Heart left ventricle (tissue), 16 donors: ENCODE measurements at regions of chr10 and their contacts with region 1.

Region 1: GRCh38 chr10:104353325-104354048 is at the start of gene CFAP58:
- DNase-seq: peak; percentile 89 to 97 (median 92)
- ATAC-seq: peak; percentile 70 to 94 (median 92)
- H3K4me3 ChIP-seq: peak within 1 kb of the TSS in 11 of 12 donors; percentile 2 to 61 (median 46)
- H3K27ac ChIP-seq: peak within 1 kb of the TSS in 5 of 12 donors; percentile 3 to 66 (median 16)
- H3K4me1 ChIP-seq: peaks cover 0 to 57% (median 15%) of the 10 kb centered on the region in 12 donors
- H3K27me3 ChIP-seq: no peaks in the 10 kb centered on the region
- CTCF ChIP-seq: peak; percentile 58 to 95 (median 76)
- POLR2A ChIP-seq: peak in 1 of 2 donors; percentile 50
- total RNA-seq, gene CFAP58: 1.2 to 4.9 (median 3.2) TPM

Region 2: DNA sequence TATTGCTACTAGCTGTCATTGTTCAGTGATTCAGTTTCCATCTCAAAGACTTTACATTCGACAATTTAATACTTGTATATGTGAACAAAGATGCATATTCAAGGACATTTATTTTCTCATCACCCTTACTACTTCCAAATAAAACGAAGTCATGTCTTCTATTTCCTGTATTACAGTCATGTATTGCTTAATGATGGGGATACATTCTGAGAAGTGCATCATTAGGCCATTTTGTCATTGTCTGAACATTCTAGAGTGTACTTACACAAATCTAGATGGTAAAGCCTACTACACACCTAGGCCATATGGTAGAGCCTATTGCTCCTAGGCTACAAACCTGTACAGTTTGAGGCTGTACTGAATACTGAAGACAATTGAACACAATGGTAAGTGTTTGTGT is 1908.6 kb before region 1 on chr10:
- intact Hi-C with region 1: no loop called
- DNase-seq: no peak
- ATAC-seq: no peak
- H3K4me3 ChIP-seq: no peak overlapping the region
- H3K27ac ChIP-seq: no peak overlapping the region
- H3K4me1 ChIP-seq: peaks cover 0 to 8% (median 3%) of the 10 kb centered on the region in 12 donors
- H3K27me3 ChIP-seq: no peaks in the 10 kb centered on the region
- CTCF ChIP-seq: no peak
- POLR2A ChIP-seq: no peak

Region 3: DNA sequence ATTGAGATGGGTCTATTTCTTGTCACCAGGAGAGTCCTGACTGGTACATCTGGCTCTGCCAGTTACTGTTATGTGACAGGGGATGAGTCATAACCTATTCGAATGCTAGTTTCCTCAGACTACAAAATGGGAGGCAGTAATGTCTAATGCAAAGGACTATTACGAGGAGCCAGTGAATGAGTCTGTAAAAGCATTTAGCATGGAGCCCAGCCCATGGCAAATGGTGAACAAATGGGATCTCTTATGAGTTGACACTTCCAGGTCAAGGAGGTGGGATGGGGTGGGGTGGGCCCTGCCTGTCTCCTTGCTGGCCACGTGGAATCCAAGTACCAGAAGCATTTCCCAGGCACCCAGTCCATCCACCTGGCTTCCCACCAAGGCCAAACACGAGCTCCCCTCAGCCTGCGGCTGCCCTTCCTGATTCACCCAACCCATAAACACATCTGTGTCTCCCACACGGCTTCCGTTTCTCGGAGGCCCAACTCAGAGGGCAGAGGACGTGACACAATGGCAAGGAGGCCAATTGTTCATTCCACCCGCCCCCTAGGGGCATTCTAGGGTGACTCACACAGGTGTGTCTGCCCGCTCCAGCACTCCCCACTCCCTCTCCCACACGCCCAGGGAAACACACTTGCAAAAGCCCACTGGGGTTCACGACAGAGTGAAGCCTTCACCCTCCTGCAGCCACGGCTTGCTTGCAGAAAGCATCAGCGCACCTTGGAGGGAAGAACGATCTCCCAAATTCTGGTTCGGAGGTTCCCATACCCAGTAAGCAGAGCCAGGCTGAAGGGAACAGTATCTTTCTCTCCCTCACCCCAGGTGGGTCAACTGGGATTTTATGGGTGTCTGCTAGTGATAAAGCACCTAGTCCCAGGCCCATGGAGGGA is 607.9 kb before region 1 on chr10:
- intact Hi-C with region 1: loop called in 1 of 10 experiments (anchors 10 kb)
- DNase-seq: peak in 3 of 5 donors; percentile 39 to 74 (median 49)
- ATAC-seq: peak in 3 of 4 donors; percentile 51 to 77 (median 61)
- H3K4me3 ChIP-seq: no peak overlapping the region
- H3K27ac ChIP-seq: peak overlapping the region in 11 of 12 donors; percentile 2 to 73 (median 43)
- H3K4me1 ChIP-seq: peaks cover 0 to 61% (median 22%) of the 10 kb centered on the region in 12 donors
- H3K27me3 ChIP-seq: no peaks in the 10 kb centered on the region
- CTCF ChIP-seq: no peak
- POLR2A ChIP-seq: no peak

Region 4: DNA sequence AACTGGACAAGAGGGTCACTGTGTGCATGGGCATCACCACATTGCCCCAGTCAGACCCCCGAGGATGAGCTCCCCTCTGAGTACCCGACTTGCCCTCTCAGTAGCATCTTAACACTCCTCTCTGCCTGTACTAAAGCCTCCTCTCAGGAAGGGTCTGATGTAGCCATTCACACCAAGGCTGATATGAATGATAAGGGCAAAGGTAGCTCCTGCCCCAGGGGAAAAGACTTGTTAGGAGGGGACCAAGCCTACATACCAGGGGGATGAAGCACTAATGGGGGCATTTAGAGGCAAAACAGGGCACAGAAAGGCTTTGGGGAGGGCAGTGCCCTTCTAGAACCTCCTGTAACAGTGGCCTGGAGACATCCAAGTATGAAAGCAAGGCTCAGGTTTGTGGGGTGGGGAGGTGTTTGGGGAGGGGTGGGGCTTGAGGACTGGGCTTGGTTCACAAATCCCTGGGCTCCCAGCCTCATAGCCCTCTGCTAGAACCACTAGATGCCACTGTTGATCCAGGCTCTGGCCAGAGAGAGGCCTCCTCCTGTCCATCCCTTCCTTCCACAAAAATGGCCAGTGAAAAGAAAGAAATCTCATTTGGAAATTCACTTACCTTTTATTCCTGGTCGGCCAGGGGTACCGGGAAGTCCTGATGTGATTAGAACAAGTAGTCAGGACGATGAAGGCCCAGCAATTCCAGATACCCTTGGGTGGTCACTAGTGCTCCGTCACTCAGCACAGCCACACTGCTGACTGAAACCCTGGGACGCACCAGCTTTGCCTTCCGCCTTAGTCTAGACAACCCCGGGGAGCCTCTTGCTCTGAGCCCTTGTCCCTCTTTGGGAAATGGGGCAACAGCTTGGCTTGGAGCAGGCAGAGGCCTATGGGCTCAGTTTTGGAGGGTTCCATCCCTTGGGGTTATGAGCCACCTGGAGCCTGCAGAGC is 308.1 kb before region 1 on chr10:
- intact Hi-C with region 1: loop called in 1 of 10 experiments (anchors 10 kb)
- DNase-seq: peak in 1 of 5 donors; percentile 34
- ATAC-seq: peak; percentile 77 to 89 (median 80)
- H3K4me3 ChIP-seq: no peak overlapping the region
- H3K27ac ChIP-seq: no peak overlapping the region
- H3K4me1 ChIP-seq: peaks cover 0 to 13% (median 0%) of the 10 kb centered on the region in 12 donors
- H3K27me3 ChIP-seq: no peaks in the 10 kb centered on the region
- CTCF ChIP-seq: peak; percentile 42 to 68 (median 54)
- POLR2A ChIP-seq: no peak

Region 5: DNA sequence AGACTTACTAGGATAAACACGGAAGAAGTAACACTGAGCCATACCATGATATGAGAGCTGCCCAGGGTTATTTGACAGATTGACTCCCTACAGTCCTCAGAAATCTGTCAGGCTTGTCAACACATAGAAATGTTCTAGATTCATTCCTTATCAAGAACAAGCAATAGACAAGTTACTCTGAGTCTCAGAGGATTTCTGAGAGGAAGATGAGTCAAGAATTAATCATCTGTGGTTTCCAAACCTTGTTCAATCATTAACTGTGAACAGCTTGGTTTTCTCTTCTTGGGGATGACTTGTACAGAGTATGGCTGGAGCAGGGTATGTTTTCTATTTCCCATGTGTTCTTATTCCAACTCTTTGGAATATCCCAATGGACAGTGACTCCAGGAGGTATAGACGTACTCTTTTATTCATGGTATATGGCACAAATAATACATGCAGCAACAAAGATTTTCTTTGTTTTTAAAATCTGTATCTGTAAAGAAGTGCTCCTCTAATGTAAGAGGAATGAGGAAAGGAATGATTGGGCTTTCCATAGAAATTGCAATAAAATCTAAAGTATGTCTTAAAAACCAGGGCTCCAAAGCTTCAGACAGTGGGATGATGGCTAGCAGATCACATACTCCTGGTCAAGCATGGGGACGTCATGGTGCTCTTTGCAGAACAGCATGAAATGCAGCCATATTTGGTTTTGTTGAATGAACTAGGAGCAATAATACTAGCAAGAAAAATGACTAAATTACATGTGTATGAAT is 243.4 kb before region 1 on chr10:
- intact Hi-C with region 1: loop called in 1 of 10 experiments (anchors 10 kb)
- DNase-seq: no peak
- ATAC-seq: no peak
- H3K4me3 ChIP-seq: no peak overlapping the region
- H3K27ac ChIP-seq: no peak overlapping the region
- H3K4me1 ChIP-seq: no peaks in the 10 kb centered on the region
- H3K27me3 ChIP-seq: no peaks in the 10 kb centered on the region
- CTCF ChIP-seq: no peak
- POLR2A ChIP-seq: no peak

Region 6: DNA sequence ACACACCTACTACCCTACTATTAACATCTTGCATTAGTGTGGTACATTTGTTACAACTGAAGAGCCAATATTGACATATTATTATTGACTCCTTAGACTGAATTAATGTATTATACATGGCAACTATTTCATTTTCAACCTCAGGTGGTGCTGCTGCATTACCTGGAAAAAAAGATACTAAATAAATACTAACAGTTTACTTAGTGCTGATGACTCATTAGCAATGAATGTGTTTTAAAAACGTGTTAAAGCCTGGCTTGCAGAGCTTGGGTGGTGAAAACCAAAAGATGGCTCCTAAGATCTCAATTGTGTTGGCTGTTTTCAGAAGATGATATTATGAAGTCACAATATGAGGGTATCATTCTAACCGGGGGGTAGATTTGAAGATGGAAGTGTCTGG is 156.1 kb before region 1 on chr10:
- intact Hi-C with region 1: no loop called
- DNase-seq: no peak
- ATAC-seq: no peak
- H3K4me3 ChIP-seq: no peak overlapping the region
- H3K27ac ChIP-seq: no peak overlapping the region
- H3K4me1 ChIP-seq: no peaks in the 10 kb centered on the region
- H3K27me3 ChIP-seq: no peaks in the 10 kb centered on the region
- CTCF ChIP-seq: no peak
- POLR2A ChIP-seq: no peak

Region 7: DNA sequence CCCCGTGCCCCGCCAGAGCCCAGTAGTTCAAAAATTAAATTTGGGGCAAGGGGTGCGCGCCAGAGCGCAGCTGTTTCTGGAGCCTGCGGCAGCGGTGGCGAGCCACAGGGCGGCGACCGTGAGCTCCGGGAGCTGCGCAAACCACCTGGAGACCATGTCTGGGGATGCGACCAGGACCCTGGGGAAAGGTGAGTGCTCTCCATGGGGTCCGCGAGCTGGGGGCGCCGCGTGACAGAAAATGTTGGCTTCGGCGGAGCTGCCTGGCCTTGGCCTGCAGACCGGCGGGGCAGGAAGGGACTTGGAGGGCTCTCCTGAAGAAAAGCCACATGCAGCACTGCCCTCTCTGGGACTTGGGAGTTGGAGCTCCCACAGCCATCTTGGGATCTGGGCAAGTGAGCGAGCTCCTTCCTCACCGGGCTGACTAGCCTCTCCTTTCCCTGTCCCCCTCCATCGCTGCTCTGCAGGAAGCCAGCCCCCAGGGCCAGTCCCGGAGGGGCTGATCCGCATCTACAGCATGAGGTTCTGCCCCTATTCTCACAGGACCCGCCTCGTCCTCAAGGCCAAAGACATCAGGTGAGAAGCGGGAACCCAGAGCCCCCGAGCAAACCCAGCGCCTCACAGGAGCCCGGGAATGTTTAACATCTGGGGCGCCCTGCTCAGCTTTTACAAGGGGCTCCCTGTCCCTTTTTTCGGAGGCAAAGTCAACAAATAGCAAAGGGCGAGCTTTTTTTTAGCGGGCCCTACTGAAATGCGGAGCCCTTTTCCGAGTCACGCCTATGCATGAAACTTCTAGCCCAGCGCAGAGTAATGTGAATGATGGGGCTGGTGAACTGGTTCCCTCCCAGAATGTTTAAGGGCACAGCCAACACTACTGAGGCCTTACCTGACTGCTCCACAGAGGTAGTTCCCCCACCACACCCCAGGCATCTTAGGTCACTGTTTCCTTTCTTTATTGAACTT is 78.4 kb before region 1 on chr10:
- intact Hi-C with region 1: loop called in 1 of 10 experiments (anchors 5 kb)
- DNase-seq: peak in 3 of 5 donors; percentile 41 to 65 (median 44)
- ATAC-seq: peak; percentile 55 to 82 (median 72)
- H3K4me3 ChIP-seq: peak overlapping the region in 1 of 12 donors; percentile 12
- H3K27ac ChIP-seq: no peak overlapping the region
- H3K4me1 ChIP-seq: peaks cover 0 to 7% (median 0%) of the 10 kb centered on the region in 12 donors
- H3K27me3 ChIP-seq: peaks cover 0 to 14% (median 4%) of the 10 kb centered on the region in 9 donors
- CTCF ChIP-seq: peak; percentile 57 to 86 (median 72)
- POLR2A ChIP-seq: no peak

Region 8: GRCh38 chr10:104291439-104291951 is 62.0 kb before region 1 on chr10:
- intact Hi-C with region 1: loop called (anchors 1 to 2 kb)
- DNase-seq: peak; percentile 88 to 93 (median 91)
- ATAC-seq: peak; percentile 86 to 96 (median 96)
- H3K4me3 ChIP-seq: no peak overlapping the region
- H3K27ac ChIP-seq: no peak overlapping the region
- H3K4me1 ChIP-seq: peaks cover 0 to 28% (median 7%) of the 10 kb centered on the region in 12 donors
- H3K27me3 ChIP-seq: no peaks in the 10 kb centered on the region
- CTCF ChIP-seq: peak; percentile 99 to 100 (median 100)
- POLR2A ChIP-seq: peak in 1 of 2 donors; percentile 26

Region 9: GRCh38 chr10:104308439-104308903 is 45.0 kb before region 1 on chr10:
- intact Hi-C with region 1: loop called in 6 of 10 experiments (anchors 1 to 5 kb)
- DNase-seq: no peak
- ATAC-seq: no peak
- H3K4me3 ChIP-seq: no peak overlapping the region
- H3K27ac ChIP-seq: peak overlapping the region in 10 of 12 donors; percentile 1 to 98 (median 90)
- H3K4me1 ChIP-seq: peaks cover 9 to 98% (median 71%) of the 10 kb centered on the region in 12 donors
- H3K27me3 ChIP-seq: no peaks in the 10 kb centered on the region
- CTCF ChIP-seq: no peak
- POLR2A ChIP-seq: no peak